ENCODE measurements at regions of chr1 and their contacts with region 1.

Region 1: DNA sequence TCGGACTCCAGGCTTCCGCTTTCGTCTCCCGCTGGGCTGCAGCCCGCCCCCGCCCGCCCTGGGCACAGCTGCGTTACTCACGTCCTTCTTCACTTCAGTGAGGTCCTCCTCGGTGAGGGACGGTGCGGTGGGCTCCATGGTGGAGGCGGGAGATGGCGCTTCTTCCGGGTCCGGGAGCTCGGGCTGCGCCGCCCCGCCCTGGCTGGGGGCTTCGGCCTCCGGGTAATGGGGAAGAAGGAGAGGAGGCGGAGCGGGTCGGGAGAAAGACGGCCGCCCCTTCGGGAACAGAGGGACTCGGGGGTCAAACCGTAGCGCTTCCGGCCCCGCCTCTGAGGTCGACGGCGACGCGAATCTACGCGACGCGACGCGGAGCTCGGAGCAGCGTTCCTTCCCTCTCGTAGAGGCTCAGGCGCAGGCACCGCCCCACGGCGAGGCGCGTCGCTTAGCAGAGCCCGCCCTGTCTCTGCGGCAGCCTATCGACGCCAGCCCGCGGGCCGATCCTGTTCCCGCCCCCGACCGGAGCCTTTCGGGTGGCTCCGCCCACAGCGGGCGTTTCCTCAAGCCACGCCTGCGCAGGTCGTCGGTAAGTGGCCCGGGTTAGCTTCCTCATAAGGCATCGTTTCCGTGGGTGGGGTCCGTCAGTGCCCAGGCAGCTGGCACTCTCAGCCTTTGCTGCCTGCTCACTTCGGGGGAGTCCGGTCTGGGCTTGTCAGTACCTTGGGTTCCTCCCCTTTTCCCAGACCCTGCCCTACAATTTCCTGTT is at the start of gene BCL10:
- DNase-seq: peak; percentile 95
- H3K4me3 ChIP-seq: peak within 1 kb of the TSS; percentile 94
- H3K4me3 Mint-ChIP-seq: peak within 1 kb of the TSS; percentile 76
- H3K27ac Mint-ChIP-seq: peak within 1 kb of the TSS; percentile 61
- H3K4me1 ChIP-seq: peaks cover 6% of the 10 kb centered on the region
- H3K4me1 Mint-ChIP-seq: peaks cover 25% of the 10 kb centered on the region
- H3K27me3 ChIP-seq: no peaks in the 10 kb centered on the region
- H3K27me3 Mint-ChIP-seq: no peaks in the 10 kb centered on the region
- CTCF ChIP-seq: no peak
- total RNA-seq, gene BCL10: 18.1 and 18.6 TPM in 2 replicates

Region 2: GRCh38 chr1:85259118-85259911 is 17.1 kb before region 1 on chr1 and contains the start of gene C1orf52:
- CTCF ChIA-PET with region 1: interaction called, 19 read pairs
- POLR2A ChIA-PET with region 1: interaction called, 11 read pairs
- intact Hi-C with region 1: no loop called
- DNase-seq: peak; percentile 90 to 94
- H3K4me3 ChIP-seq: peak within 1 kb of the TSS; percentile 80
- H3K4me3 Mint-ChIP-seq: peak within 1 kb of the TSS; percentile 95
- H3K27ac Mint-ChIP-seq: peak within 1 kb of the TSS; percentile 87
- H3K4me1 ChIP-seq: no peaks in the 10 kb centered on the region
- H3K4me1 Mint-ChIP-seq: peaks cover 15% of the 10 kb centered on the region
- H3K27me3 ChIP-seq: no peaks in the 10 kb centered on the region
- H3K27me3 Mint-ChIP-seq: no peaks in the 10 kb centered on the region
- CTCF ChIP-seq: peak; percentile 75 to 86
- total RNA-seq, gene C1orf52: 30.4 and 30.7 TPM in 2 replicates

Region 3: DNA sequence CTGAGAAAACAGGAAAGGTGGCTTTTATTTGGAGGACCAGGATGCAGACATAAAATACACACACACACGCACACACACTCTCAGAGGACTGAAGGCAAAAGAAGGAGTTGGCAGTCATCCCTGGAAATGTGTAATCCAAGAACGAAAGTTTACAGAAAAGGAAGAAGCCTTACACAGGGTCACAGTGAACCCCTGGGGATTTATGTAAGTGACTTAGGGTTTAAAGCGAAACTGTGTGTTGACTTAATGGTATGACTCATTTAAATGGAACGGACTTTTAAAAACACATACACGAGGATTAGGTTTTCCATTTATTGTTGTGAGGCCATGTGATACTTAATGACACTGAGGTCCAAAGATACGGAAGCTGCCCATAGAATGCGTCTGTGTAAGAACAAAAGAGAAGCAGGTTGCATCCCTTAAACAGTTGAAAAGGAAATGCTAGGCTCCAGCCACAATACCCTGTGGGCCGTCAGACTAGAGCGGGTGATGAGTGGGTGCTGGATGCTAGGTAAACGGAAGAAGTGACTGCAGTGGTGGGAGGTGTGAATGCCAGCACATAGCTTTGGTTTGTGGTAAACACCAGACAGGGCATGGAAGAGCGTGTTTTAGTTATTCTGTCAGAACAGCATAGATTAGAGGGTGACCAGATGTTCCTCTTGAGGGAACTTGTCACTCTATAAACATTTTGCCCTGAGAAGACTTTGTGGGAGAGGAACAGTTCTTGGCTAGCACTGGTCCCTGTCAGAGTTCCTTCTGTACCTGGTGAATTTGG is 21.6 kb after region 1 on chr1:
- CTCF ChIA-PET with region 1: interaction called, 3 read pairs
- POLR2A ChIA-PET with region 1: no interaction called
- intact Hi-C with region 1: loop called (anchors 2 kb)
- DNase-seq: no peak
- H3K4me3 ChIP-seq: no peak overlapping the region
- H3K4me3 Mint-ChIP-seq: peak overlapping the region; percentile 47
- H3K27ac Mint-ChIP-seq: peak overlapping the region; percentile 50
- H3K4me1 ChIP-seq: peaks cover 13% of the 10 kb centered on the region
- H3K4me1 Mint-ChIP-seq: peaks cover 19% of the 10 kb centered on the region
- H3K27me3 ChIP-seq: no peaks in the 10 kb centered on the region
- H3K27me3 Mint-ChIP-seq: no peaks in the 10 kb centered on the region
- CTCF ChIP-seq: no peak